ENCODE measurements at regions of chr11 and their contacts with region 1.

Region 1: DNA sequence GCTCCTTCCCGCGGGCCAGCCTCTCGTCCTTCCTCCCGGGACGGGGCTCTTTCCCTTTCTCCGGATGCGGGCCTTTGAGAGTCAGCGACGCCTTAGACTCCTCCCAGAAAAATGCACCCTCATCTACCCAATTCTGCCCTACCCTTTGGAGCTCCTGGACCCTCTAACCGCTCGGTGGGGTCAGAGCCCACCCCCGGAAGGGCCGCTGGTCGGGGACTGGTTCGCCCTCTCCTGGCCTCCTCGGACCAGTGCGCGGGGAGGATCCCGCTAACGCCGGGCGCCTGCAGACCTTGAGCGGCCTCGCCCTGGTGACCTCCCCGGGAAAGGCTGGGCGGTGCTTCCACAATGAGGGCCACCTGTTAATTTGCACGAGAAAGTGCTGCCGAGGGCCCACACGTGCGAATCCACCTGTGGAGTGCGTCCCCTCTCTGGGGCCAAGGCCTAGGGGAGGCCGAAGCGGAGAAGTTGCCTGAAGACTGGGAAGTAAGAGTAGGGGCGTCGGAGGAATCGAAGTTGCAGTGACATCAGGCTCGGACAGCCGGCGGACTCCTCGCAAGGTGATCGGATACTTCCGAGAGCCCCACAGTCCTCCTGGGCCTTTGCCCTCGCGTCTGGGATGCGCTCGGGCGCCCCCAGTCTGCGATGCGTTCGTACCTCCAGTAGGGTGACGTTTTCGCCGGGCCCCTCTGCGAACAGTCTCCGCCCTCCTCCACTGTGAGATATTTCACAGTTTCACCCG is 61.5 kb downstream of the ENDOD1 start:
- DNase-seq: peak in 1 of 2 donors; percentile 97
- H3K4me3 ChIP-seq: peak overlapping the region; percentile 59 to 74
- H3K27ac ChIP-seq: peak overlapping the region; percentile 96
- H3K4me1 ChIP-seq: peaks cover 49% of the 10 kb centered on the region
- H3K27me3 ChIP-seq: no peaks in the 10 kb centered on the region
- CTCF ChIP-seq: peak; percentile 89 to 98 (median 93)
- POLR2A ChIP-seq: peak in 1 of 2 donors; percentile 59

Region 2: DNA sequence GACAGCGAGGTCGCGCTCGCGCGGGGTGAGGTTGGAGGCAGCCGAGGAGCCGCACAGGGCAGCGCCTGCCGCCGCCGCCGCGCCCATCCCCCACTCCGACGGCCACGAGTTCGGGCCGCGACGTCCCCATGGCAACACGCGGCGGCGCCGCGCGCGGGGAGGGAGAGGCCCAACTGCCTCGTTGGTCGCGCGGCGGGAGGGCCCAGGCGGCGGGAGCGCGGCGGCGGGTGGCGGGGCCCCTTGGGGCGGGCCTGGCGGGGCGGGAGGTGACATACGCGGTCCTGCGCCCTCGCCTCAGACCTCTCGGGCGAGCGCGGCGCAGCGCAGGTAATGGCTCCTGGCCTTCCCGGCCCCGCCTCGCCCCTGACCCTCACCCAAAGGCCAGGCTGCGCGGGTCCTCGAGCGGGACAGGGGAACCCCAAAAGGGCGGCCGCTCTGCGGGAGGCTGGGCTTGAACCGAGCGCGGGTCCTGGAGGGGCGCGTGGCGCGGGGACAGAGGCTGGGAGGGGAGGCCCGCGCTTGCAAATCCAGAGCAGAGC is 1820.6 kb before region 1 on chr11 and contains the start of gene DEUP1:
- intact Hi-C with region 1: no loop called
- DNase-seq: no peak
- H3K4me3 ChIP-seq: peak within 1 kb of the TSS; percentile 27 to 37
- H3K27ac ChIP-seq: no peak within 1 kb of the TSS
- H3K4me1 ChIP-seq: no peaks in the 10 kb centered on the region
- H3K27me3 ChIP-seq: no peaks in the 10 kb centered on the region
- CTCF ChIP-seq: no peak
- POLR2A ChIP-seq: no peak
- total RNA-seq, gene DEUP1: not detected

Region 3: DNA sequence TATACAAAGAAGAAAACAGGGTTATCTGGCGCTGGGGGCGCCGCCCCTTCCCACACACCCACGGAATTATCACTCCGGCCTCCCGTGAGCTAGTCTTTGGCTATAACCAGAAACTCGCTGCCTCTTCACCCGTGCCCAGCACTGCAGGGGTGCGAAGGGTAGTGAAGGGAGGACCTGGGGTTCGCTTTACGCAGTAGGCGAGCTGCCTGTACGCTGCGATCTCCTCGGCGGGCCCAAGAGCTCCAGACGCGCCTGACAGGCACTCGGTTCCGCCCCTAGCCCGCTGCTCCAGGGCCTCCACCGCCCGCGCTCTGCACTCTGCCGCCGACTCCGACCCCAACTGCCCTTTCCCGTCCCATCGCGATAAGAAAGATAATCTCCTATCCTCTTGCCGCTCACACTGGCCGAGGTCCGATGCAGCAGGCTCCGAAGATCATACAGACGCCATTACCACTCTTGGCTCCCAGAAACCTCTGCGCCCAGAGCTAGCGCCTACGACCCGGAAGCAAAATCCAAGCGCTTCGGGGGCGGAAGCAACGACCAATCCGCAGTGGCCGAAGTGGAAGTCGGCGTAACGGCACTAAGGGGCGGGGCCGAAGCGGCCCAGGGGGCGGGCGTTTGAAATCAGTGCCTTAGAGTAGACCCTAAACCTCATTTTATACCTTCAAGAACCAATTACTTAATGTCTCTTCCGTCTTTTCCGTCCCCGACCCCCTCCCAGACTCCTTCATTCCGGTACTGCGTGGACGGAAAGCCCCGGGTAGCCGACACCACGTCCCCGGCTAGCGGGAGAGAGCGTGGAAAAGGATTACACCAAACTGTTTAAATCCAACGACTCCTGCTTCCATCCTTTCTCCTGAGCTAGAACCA is 177.8 kb before region 1 on chr11 and contains the starts of genes CWC15 and KDM4D:
- intact Hi-C with region 1: loop called (anchors 10 kb)
- DNase-seq: peak in 1 of 2 donors; percentile 95
- H3K4me3 ChIP-seq: peak within 1 kb of the TSS; percentile 82 to 96
- H3K27ac ChIP-seq: peak within 1 kb of the TSS; percentile 81
- H3K4me1 ChIP-seq: peaks cover 17% of the 10 kb centered on the region
- H3K27me3 ChIP-seq: no peaks in the 10 kb centered on the region
- CTCF ChIP-seq: peak in 1 of 3 experiments; percentile 36
- POLR2A ChIP-seq: peak in 1 of 2 donors; percentile 33
- total RNA-seq, gene CWC15: 38.1 TPM
- total RNA-seq, gene KDM4D: 0.25 TPM

Region 4: GRCh38 chr11:95067039-95067840 is 83.9 kb before region 1 on chr11:
- intact Hi-C with region 1: loop called (anchors 2 kb)
- DNase-seq: no peak
- H3K4me3 ChIP-seq: peak overlapping the region; percentile 53 to 60
- H3K27ac ChIP-seq: peak overlapping the region; percentile 95
- H3K4me1 ChIP-seq: peaks cover 27% of the 10 kb centered on the region
- H3K27me3 ChIP-seq: no peaks in the 10 kb centered on the region
- CTCF ChIP-seq: peak in 1 of 3 experiments; percentile 35
- POLR2A ChIP-seq: peak in 1 of 2 donors; percentile 41

Region 5: DNA sequence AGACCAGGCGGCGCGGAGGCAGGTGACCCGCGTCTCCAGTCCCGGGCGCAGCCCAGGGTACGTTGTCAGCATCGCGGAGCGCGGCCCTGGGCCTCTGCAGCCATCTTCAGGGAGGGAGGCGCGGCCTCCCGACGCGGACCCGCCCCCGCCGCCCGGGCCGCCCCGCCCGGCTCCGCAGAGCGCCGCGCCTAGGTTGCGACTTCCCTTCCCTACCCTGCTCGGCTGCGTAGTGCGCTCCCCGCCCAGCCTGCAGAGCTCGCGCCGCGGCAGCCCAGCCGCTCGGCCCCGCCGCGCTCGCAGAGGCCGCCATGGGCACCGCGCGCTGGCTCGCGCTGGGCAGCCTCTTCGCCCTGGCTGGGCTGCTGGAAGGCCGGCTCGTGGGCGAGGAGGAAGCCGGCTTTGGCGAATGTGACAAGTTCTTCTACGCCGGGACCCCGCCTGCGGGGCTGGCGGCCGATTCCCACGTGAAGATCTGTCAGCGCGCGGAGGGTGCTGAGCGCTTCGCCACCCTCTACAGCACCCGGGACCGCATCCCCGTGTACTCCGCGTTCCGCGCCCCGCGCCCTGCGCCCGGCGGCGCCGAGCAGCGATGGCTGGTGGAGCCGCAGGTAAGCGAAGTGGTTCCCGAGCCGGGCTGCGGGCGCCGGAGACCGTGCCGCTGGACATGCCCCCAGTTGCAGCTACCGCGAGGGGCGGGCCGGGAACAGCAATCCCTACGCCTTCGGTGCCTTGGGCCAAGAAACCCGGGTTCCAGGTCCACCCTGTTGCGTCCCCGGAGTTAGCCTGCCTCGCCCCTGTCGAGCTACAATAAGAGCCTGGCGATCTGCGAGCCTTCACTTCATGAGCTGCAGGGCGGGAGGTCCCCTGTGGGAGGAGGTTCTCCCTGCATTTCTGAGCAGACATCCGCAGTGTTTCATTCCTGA is 61.2 kb before region 1 on chr11 and contains the start of gene ENDOD1:
- intact Hi-C with region 1: loop called (anchors 10 kb)
- DNase-seq: peak in 1 of 2 donors; percentile 89
- H3K4me3 ChIP-seq: peak within 1 kb of the TSS; percentile 76 to 94
- H3K27ac ChIP-seq: peak within 1 kb of the TSS; percentile 96
- H3K4me1 ChIP-seq: peaks cover 45% of the 10 kb centered on the region
- H3K27me3 ChIP-seq: no peaks in the 10 kb centered on the region
- CTCF ChIP-seq: no peak
- POLR2A ChIP-seq: peak in 1 of 2 donors; percentile 71
- total RNA-seq, gene ENDOD1: 47.9 TPM

Region 6: DNA sequence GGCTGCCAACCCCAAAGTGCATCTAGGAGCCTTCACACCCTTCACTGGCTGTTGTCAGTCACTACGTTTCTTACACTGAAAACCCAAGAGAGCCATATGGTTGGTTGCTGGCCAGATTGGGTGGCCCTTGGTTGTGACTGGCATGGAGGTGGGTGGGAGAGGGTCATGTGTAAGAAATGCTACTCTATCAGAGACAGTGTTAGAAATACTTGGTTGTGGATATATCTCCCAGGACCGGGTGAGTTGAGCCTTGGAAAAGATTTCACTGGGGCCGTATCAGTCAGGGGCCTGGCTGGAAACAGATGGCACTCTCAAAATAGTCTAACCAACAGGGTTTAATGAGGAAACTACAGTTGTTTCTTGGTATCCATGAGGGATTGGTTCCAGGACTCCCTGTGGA is 46.3 kb before region 1 on chr11:
- intact Hi-C with region 1: no loop called
- DNase-seq: no peak
- H3K4me3 ChIP-seq: no peak overlapping the region
- H3K27ac ChIP-seq: no peak overlapping the region
- H3K4me1 ChIP-seq: peaks cover 46% of the 10 kb centered on the region
- H3K27me3 ChIP-seq: no peaks in the 10 kb centered on the region
- CTCF ChIP-seq: no peak
- POLR2A ChIP-seq: no peak

Region 7: DNA sequence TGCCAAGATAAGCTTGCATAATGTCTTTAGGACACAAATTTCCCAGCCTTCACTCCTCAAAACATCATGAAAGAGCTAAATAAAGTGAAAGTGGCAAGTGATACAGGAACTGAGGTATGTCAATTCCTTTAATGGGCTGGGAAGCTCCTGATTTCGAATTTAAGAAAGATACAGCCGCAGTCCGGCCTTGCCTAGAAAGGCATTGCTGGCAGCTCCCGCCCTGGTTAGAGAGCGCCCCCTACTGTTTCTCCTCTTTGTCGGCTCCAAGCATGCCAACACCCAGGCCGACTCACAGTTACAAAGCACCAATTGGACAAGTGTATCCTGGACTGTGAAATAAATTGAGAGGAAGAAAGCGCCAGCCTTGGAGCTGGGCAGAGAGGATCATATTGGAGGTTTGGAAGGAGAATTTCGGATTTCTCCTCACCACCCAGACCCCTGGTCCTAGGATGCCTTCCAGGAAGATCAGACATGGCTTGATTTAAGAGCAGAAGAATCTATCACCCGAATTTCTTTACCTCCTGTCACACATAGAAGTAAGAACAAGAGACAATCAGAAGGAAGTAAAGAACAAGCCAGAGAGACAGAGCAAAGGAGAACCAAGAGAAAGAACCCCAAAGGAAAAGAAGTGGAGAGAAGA is 554.5 kb after region 1 on chr11:
- intact Hi-C with region 1: loop called (anchors 5 kb)
- DNase-seq: peak in 1 of 2 donors; percentile 94
- H3K4me3 ChIP-seq: no peak overlapping the region
- H3K27ac ChIP-seq: peak overlapping the region; percentile 63
- H3K4me1 ChIP-seq: peaks cover 44% of the 10 kb centered on the region
- H3K27me3 ChIP-seq: no peaks in the 10 kb centered on the region
- CTCF ChIP-seq: peak; percentile 85 to 94 (median 89)
- POLR2A ChIP-seq: no peak

Region 8: DNA sequence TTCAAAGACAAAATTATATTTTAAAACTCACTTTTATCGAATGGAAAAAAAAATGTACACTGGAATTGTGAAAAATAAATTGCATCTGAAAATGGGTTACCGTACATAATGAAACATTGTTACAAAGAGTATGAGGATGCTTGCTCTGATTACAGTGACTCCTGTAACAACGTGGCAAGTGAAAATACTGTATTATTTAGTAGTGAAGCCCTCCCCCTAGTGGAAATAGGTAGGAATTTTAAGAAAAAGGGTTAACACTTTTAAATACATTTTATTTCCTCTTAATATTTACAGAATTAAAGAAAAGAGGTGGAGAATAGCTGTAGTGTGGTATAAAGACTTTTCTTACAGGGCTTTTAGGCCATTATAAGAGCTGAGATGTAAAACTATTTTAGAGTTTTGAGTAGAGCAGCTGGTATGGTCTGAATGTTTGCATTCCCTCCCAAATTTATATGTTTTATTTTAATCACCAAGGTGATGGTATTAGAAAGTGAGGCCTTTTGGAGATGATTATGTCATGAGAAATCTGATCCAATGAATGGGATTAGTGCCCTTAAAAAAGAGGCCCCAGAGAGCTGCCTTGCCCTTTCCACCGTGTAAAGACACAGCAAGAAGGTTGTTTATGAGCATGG is 613.3 kb after region 1 on chr11:
- intact Hi-C with region 1: loop called (anchors 1 kb)
- DNase-seq: no peak
- H3K4me3 ChIP-seq: no peak overlapping the region
- H3K27ac ChIP-seq: no peak overlapping the region
- H3K4me1 ChIP-seq: no peaks in the 10 kb centered on the region
- H3K27me3 ChIP-seq: no peaks in the 10 kb centered on the region
- CTCF ChIP-seq: peak; percentile 60 to 86 (median 65)
- POLR2A ChIP-seq: no peak